ENCODE measurements at regions of chr1 and their contacts with region 1.

Region 1: DNA sequence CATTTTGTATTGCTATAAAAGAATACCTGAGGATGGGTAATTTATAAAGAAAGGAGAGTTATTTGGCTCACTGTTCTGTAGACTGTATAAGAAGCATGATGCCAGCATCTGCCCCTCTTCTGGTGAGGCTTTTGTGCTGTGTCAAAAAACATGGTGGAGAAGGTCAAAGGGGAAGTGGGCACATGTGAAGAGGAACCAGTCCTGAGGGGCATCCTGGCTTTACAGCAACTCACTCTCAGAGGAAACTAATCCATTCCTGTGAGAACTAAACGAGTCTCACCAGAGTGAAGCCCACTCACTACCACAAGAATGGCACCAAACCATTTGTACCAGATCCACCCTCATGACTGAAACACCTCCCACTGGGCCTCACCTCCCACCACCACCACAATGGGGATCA is 18.8 kb upstream of the SELP start:
- DNase-seq: no peak
- H3K4me3 Mint-ChIP-seq: peak overlapping the region; percentile 58
- H3K27ac Mint-ChIP-seq: peak overlapping the region; percentile 95
- H3K4me1 Mint-ChIP-seq: peaks cover 40% of the 10 kb centered on the region
- H3K27me3 Mint-ChIP-seq: no peaks in the 10 kb centered on the region

Region 2: GRCh38 chr1:169670836-169671235 is 22.1 kb after region 1 on chr1:
- CTCF ChIA-PET with region 1: no interaction called
- intact Hi-C with region 1: loop called (anchors 1 kb)
- DNase-seq: no peak
- H3K4me3 Mint-ChIP-seq: no peak overlapping the region
- H3K27ac Mint-ChIP-seq: peak overlapping the region; percentile 62
- H3K4me1 Mint-ChIP-seq: peaks cover 60% of the 10 kb centered on the region
- H3K27me3 Mint-ChIP-seq: no peaks in the 10 kb centered on the region

Region 3: GRCh38 chr1:169680377-169681019 is 31.8 kb after region 1 on chr1:
- CTCF ChIA-PET with region 1: no interaction called
- intact Hi-C with region 1: loop called (anchors 1 kb)
- DNase-seq: peak; percentile 83
- H3K4me3 Mint-ChIP-seq: peak overlapping the region; percentile 53
- H3K27ac Mint-ChIP-seq: peak overlapping the region; percentile 90
- H3K4me1 Mint-ChIP-seq: peaks cover 61% of the 10 kb centered on the region
- H3K27me3 Mint-ChIP-seq: no peaks in the 10 kb centered on the region